ENCODE measurements at regions of chr14 and their contacts with region 1.

Region 1: DNA sequence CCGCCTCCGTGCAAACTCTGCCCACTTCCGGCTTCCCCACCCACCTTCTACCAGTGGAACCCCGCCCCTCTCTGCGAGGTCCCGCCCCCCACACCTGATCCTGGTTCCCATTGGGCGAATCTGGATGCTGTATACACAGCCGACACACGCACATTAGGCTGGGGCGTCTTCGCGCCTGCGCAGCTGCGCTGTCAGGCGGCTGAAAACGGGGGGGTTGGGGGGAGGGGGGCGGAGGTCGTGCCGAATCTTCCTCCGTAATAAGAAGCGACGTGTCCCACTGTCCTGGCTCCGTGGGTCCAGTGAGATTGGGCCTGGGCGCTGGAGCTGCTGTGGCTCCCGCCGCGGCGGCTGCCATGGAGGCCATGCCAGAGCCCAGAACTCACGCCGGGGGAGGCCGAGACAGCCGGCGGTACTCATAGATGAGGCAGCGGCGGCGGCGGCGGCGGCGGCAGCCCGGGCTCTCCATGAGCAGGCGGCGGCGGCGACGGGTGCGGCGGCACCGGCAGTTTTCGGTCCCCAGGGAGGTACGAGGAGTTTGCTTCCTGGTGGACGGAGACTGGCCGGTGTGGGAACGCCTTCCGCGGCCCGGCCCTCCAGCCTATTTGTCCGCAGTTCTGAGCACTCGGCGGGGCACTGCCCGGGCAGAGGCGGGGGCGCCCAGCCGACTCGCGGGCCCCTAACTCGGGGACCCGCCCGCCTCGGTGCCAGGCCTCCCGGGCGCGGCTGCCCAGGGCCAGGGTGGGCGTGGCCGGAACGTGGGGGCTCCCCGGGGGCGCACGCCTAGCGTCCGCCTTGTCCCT is 64.5 kb downstream of the KLHL28 start:
- DNase-seq: peak; percentile 97
- H3K4me3 ChIP-seq: peak overlapping the region; percentile 64 to 76 (median 75)
- H3K27ac ChIP-seq: peak overlapping the region; percentile 68
- H3K4me1 ChIP-seq: peaks cover 12% of the 10 kb centered on the region
- H3K27me3 ChIP-seq: no peaks in the 10 kb centered on the region
- CTCF ChIP-seq: no peak
- POLR2A ChIP-seq: peak; percentile 65

Region 2: GRCh38 chr14:44279357-44279756 is 617.9 kb before region 1 on chr14:
- CTCF ChIA-PET with region 1: no interaction called
- POLR2A ChIA-PET with region 1: no interaction called
- dilution Hi-C with region 1: no loop called
- intact Hi-C with region 1: no loop called
- DNase-seq: no peak
- H3K4me3 ChIP-seq: no peak overlapping the region
- H3K27ac ChIP-seq: no peak overlapping the region
- H3K4me1 ChIP-seq: no peaks in the 10 kb centered on the region
- H3K27me3 ChIP-seq: no peaks in the 10 kb centered on the region
- CTCF ChIP-seq: no peak
- POLR2A ChIP-seq: no peak

Region 3: DNA sequence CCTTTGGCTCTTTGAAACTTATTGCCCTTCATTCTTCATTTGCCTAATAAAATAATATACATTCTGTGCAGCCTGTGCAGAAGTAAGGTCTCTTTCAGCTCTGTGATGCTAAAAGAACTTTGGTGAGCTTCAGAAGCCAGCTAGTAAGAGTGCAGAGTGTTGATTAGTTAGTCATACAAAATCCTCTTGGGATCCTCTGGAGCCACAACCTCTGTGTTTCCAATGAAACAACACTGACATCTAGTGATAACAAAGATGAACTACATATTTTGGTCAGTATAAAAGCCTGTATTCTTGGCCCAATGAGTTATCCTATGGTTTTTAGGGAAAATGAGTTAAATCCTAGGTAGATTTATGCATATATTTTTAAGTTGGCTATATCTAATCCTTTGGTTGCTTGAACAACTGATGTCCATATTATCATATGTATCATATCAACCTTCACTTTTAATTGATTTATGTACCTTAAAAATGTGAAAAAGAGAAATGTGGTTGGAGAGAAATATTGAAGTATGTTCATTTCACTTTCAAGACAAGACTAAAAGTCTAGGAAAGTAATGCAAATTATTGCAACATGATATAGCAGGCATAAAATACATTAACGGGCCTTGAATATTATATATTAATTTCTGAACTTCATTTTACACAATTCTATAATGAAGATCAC is 93.9 kb before region 1 on chr14:
- CTCF ChIA-PET with region 1: no interaction called
- POLR2A ChIA-PET with region 1: no interaction called
- dilution Hi-C with region 1: no loop called
- intact Hi-C with region 1: no loop called
- DNase-seq: peak; percentile 53
- H3K4me3 ChIP-seq: no peak overlapping the region
- H3K27ac ChIP-seq: no peak overlapping the region
- H3K4me1 ChIP-seq: no peaks in the 10 kb centered on the region
- H3K27me3 ChIP-seq: no peaks in the 10 kb centered on the region
- CTCF ChIP-seq: peak; percentile 26 to 29
- POLR2A ChIP-seq: no peak

Region 4: GRCh38 chr14:44961604-44962333 is 64.5 kb after region 1 on chr14 and contains the starts of genes KLHL28 and TOGARAM1:
- CTCF ChIA-PET with region 1: no interaction called
- POLR2A ChIA-PET with region 1: interaction called, 7 read pairs
- dilution Hi-C with region 1: no loop called
- intact Hi-C with region 1: loop called (anchors 1 kb)
- DNase-seq: peak; percentile 100
- H3K4me3 ChIP-seq: peak within 1 kb of the TSS; percentile 71 to 83 (median 72)
- H3K27ac ChIP-seq: peak within 1 kb of the TSS; percentile 60
- H3K4me1 ChIP-seq: peaks cover 35% of the 10 kb centered on the region
- H3K27me3 ChIP-seq: no peaks in the 10 kb centered on the region
- CTCF ChIP-seq: no peak
- POLR2A ChIP-seq: peak; percentile 95
- total RNA-seq, gene KLHL28: 7.3 and 8.4 TPM in 2 replicates
- total RNA-seq, gene TOGARAM1: 13.3 and 13.8 TPM in 2 replicates

Region 5: GRCh38 chr14:45083971-45084722 is 186.9 kb after region 1 on chr14 and contains the start of gene PRPF39:
- CTCF ChIA-PET with region 1: no interaction called
- POLR2A ChIA-PET with region 1: no interaction called
- dilution Hi-C with region 1: no loop called
- intact Hi-C with region 1: loop called (anchors 5 kb)
- DNase-seq: peak; percentile 95
- H3K4me3 ChIP-seq: peak within 1 kb of the TSS; percentile 50 to 86 (median 81)
- H3K27ac ChIP-seq: peak within 1 kb of the TSS; percentile 63
- H3K4me1 ChIP-seq: peaks cover 8% of the 10 kb centered on the region
- H3K27me3 ChIP-seq: no peaks in the 10 kb centered on the region
- CTCF ChIP-seq: no peak
- POLR2A ChIP-seq: peak; percentile 97
- total RNA-seq, gene PRPF39: 36.3 and 44.4 TPM in 2 replicates

Measured in endothelial cell of umbilical vein (primary cell).